ENCODE measurements at regions of chr17 and their contacts with region 1.

Region 1: GRCh38 chr17:45218895-45219661 is 2.6 kb upstream of the FMNL1 start:
- DNase-seq: peak; percentile 68
- H3K4me3 ChIP-seq: no peak overlapping the region
- H3K27ac ChIP-seq: no peak overlapping the region
- H3K27me3 ChIP-seq: peaks cover 15% of the 10 kb centered on the region
- CTCF ChIP-seq: peak; percentile 91

Region 2: GRCh38 chr17:45006927-45007461 is 212.1 kb before region 1 on chr17:
- in situ Hi-C with region 1: no loop called
- DNase-seq: no peak
- H3K4me3 ChIP-seq: no peak overlapping the region
- H3K27ac ChIP-seq: no peak overlapping the region
- H3K27me3 ChIP-seq: peaks cover 14% of the 10 kb centered on the region
- CTCF ChIP-seq: no peak

Region 3: GRCh38 chr17:45385331-45385997 is 166.4 kb after region 1 on chr17:
- in situ Hi-C with region 1: loop called (anchors 25 kb)
- DNase-seq: peak; percentile 65
- H3K4me3 ChIP-seq: no peak overlapping the region
- H3K27ac ChIP-seq: no peak overlapping the region
- H3K27me3 ChIP-seq: no peaks in the 10 kb centered on the region
- CTCF ChIP-seq: peak; percentile 99

Measured in brain microvascular endothelial cell (primary cell).